Heart left ventricle (tissue), 16 donors: ENCODE measurements at regions of chr10 and their contacts with region 1.

Region 1: DNA sequence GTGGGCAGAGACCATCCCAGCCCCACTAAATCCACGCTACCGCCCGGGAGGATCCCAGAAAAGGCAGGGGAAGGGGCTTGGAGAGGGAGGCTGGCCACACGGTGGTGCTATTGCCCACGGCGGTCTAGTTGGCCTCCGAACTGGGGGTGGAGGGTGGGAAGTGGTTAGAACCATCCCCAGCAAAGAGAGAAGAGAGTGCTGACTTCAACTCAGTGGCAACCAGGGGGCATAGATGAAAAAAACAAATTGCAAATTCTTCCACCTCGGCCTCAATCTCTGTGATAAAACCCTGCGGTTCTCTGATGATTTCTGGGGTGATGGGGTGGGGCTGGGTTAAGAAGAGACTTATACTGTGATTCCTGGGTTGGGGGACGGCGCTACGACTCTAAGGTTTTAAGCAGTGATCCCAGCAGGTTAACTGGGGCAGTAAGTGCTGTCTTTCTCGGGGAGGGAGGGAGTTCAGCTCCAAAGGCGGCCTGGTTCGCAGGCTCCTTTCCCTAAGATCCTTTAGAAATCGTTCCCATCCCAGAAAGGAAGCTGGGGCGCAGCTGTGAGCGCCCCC is 154.5 kb upstream of the LYZL2 start:
- DNase-seq: peak; percentile 88 to 93 (median 90)
- ATAC-seq: peak; percentile 80 to 86 (median 80)
- H3K4me3 ChIP-seq: peak overlapping the region; percentile 61 to 89 (median 76)
- H3K27ac ChIP-seq: peak overlapping the region; percentile 91 to 99 (median 98)
- H3K4me1 ChIP-seq: peaks cover 0 to 46% (median 18%) of the 10 kb centered on the region in 12 donors
- H3K27me3 ChIP-seq: no peaks in the 10 kb centered on the region
- CTCF ChIP-seq: peak; percentile 75 to 89 (median 86)
- POLR2A ChIP-seq: no peak

Region 2: GRCh38 chr10:30857803-30858202 is 73.8 kb after region 1 on chr10:
- intact Hi-C with region 1: loop called in 4 of 10 experiments (anchors 5 to 10 kb)
- DNase-seq: peak; percentile 71 to 87 (median 76)
- ATAC-seq: peak; percentile 81 to 96 (median 90)
- H3K4me3 ChIP-seq: no peak overlapping the region
- H3K27ac ChIP-seq: peak overlapping the region; percentile 23 to 78 (median 65)
- H3K4me1 ChIP-seq: peaks cover 0 to 63% (median 29%) of the 10 kb centered on the region in 12 donors
- H3K27me3 ChIP-seq: no peaks in the 10 kb centered on the region
- CTCF ChIP-seq: no peak
- POLR2A ChIP-seq: no peak

Region 3: GRCh38 chr10:31083765-31084184 is 299.8 kb after region 1 on chr10:
- intact Hi-C with region 1: loop called in 2 of 10 experiments (anchors 5 kb)
- DNase-seq: peak in 2 of 5 donors; percentile 35 to 55
- ATAC-seq: peak in 3 of 4 donors; percentile 58 to 73 (median 69)
- H3K4me3 ChIP-seq: no peak overlapping the region
- H3K27ac ChIP-seq: no peak overlapping the region
- H3K4me1 ChIP-seq: peaks cover 0 to 6% (median 0%) of the 10 kb centered on the region in 12 donors
- H3K27me3 ChIP-seq: no peaks in the 10 kb centered on the region
- CTCF ChIP-seq: peak; percentile 21 to 63 (median 46)
- POLR2A ChIP-seq: no peak

Region 4: GRCh38 chr10:31157123-31158010 is 373.3 kb after region 1 on chr10:
- intact Hi-C with region 1: loop called in 1 of 10 experiments (anchors 10 kb)
- DNase-seq: peak; percentile 82 to 87 (median 86)
- ATAC-seq: peak; percentile 77 to 93 (median 90)
- H3K4me3 ChIP-seq: peak overlapping the region in 3 of 12 donors; percentile 0 to 12 (median 6)
- H3K27ac ChIP-seq: peak overlapping the region; percentile 12 to 83 (median 76)
- H3K4me1 ChIP-seq: peaks cover 3 to 36% (median 29%) of the 10 kb centered on the region in 12 donors
- H3K27me3 ChIP-seq: no peaks in the 10 kb centered on the region
- CTCF ChIP-seq: no peak
- POLR2A ChIP-seq: no peak

Region 5: DNA sequence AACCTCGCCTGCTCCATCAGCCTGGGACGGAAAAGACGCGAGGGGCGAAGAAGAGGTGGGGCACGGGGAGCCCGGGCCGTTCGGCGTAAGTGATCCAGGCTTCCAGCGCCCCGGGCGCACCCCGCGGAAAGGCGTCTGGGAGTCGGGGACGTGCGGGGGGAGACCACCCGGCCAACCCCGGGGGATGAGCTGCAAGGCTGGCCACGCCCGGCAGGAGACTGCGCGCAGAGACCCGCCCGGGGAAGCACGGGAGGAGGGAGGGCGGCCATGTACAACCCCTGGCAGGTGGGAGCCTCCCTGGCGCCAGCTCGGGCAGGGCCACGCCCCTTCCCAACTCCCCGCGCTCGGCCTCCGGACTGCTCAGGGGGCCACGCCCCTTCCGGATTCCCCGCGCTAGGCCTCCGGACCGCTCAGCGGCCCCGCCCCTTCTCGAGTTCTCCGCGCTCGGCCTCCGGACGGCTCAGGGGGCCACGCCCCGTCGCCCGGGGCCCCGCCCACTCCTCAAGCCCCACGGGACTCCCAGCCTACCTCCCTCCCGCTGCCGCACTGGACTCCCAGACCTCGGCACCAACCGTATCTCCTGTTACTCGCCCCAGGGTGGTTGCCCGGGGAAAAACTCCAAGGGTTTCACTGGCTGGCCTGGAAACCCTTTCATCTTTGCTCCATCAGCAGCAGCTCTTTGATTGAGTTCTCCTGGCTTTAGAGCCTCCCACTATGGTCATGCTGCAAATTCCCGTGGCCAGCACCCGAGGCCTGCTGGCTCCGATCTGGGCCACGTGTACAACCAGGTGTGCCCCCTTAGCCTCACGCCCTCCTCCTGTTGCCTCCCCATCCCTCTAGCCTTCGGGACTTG is 819.4 kb after region 1 on chr10:
- intact Hi-C with region 1: loop called in 1 of 10 experiments (anchors 10 kb)
- DNase-seq: peak; percentile 97 to 98 (median 97)
- ATAC-seq: peak; percentile 93 to 97 (median 96)
- H3K4me3 ChIP-seq: peak overlapping the region; percentile 42 to 80 (median 66)
- H3K27ac ChIP-seq: peak overlapping the region; percentile 79 to 95 (median 90)
- H3K4me1 ChIP-seq: peaks cover 0 to 36% (median 15%) of the 10 kb centered on the region in 12 donors
- H3K27me3 ChIP-seq: no peaks in the 10 kb centered on the region
- CTCF ChIP-seq: peak in 6 of 12 donors; percentile 7 to 18 (median 11)
- POLR2A ChIP-seq: peak in 1 of 2 donors; percentile 64

Region 6: GRCh38 chr10:31707093-31708039 is 923.3 kb after region 1 on chr10:
- intact Hi-C with region 1: loop called in 1 of 10 experiments (anchors 10 kb)
- DNase-seq: peak; percentile 84 to 86 (median 84)
- ATAC-seq: peak; percentile 72 to 92 (median 90)
- H3K4me3 ChIP-seq: peak overlapping the region in 9 of 12 donors; percentile 7 to 41 (median 31)
- H3K27ac ChIP-seq: peak overlapping the region; percentile 74 to 97 (median 87)
- H3K4me1 ChIP-seq: peaks cover 0 to 64% (median 41%) of the 10 kb centered on the region in 12 donors
- H3K27me3 ChIP-seq: no peaks in the 10 kb centered on the region
- CTCF ChIP-seq: no peak
- POLR2A ChIP-seq: no peak

Region 7: DNA sequence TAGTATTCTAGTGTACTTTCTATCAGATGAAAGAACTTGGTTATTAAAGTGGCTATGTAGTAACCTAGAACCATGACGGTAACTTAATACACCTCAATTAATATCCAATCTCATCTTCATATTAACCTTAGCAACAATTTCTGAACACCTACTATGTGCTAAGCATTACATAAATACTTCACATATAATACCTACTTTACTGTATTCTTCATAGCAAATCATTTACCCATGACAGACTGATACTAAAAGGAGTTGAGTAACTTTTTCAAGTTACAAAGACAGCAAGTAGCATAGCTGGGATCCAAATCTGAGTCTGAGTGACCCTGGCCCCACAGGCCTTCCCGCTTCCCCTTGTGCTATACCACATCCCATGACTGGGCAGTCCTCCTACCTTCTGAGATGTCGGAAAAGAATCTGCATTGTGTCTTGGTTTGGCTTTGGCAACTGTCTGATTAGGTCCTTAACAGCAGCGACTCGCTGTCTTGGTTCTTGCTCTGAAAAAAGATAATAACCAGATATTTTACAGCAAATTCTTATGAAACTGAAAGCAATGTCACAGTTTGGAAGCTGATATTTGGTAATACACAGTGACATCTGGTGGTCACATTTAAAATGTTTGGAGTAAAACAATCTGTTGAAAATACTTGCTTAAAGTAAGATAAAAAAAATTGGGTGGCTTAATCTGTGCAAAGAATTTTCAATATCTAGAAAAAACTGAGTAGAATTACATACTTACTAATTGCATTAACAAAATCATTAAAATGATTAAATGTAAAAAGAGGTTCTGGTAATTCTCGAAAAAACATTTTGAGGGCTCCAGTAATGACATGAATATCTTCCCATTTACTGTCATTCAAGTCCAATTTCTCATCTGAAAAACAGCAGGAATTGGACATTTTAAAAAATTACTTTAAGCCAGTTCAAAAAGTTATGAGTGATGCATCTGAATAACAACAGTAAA is 1024.5 kb after region 1 on chr10:
- intact Hi-C with region 1: loop called in 6 of 10 experiments (anchors 1 to 10 kb)
- DNase-seq: peak; percentile 28 to 51 (median 35)
- ATAC-seq: peak; percentile 51 to 86 (median 80)
- H3K4me3 ChIP-seq: peak overlapping the region in 11 of 12 donors; percentile 18 to 60 (median 47)
- H3K27ac ChIP-seq: peak overlapping the region; percentile 13 to 86 (median 80)
- H3K4me1 ChIP-seq: peaks cover 0 to 12% (median 0%) of the 10 kb centered on the region in 12 donors
- H3K27me3 ChIP-seq: no peaks in the 10 kb centered on the region
- CTCF ChIP-seq: peak; percentile 37 to 79 (median 62)
- POLR2A ChIP-seq: no peak